ENCODE measurements at regions of chr1 and their contacts with region 1.

Region 1: GRCh38 chr1:160251687-160252526 is 10.4 kb downstream of the DCAF8 start:
- DNase-seq: peak; percentile 17
- H3K4me3 ChIP-seq: no peak overlapping the region
- H3K27me3 ChIP-seq: no peaks in the 10 kb centered on the region
- CTCF ChIP-seq: peak; percentile 70

Region 2: GRCh38 chr1:160085686-160086455 is 166.0 kb before region 1 on chr1:
- CTCF ChIA-PET with region 1: interaction called, 29 read pairs
- POLR2A ChIA-PET with region 1: interaction called, 6 read pairs
- DNase-seq: no peak
- H3K4me3 ChIP-seq: no peak overlapping the region
- H3K27me3 ChIP-seq: peaks cover 20% of the 10 kb centered on the region
- CTCF ChIP-seq: peak; percentile 91

Region 3: DNA sequence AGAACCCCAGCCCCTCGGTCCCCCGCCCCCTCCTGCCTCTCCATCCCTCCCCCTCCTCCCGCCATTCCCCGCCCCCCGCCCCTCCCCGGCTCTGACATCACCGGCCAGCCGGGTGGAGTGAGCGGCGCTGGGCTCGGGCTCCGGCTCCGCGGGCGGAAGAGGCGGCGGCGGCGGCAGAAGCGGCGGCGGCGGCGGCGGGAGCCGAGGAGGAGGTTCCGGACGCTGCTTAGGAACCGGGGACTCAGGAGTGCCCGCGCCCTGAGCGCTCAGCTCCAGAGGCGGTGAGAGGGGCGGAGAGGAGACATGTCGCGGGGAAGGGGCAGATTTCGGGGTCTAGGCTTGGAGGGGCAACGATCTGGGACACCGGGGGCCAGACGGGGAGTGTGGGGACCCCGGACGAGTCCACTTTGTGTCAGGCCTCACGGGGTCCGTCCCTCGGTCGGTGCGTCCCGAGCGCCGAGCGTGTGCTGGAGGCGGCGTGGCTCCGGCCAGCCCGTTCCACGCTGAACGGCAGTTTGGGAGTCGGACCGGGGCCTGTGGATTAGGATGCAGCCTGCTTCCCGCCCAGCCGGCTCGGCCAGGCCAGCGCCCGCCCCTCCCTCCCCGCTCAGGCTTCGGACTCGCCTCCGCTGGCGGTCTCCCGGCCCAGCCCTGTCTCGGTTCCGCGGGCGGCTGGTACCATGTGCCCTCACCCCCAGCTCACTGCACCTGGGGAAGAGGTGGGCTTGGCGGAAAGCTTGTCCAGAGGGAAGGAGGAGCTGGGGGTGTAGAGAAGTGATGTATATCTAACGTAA is 46.5 kb before region 1 on chr1 and contains the start of gene PEA15:
- CTCF ChIA-PET with region 1: interaction called, 11 read pairs
- POLR2A ChIA-PET with region 1: no interaction called
- DNase-seq: no peak
- H3K4me3 ChIP-seq: peak within 1 kb of the TSS; percentile 97
- H3K27me3 ChIP-seq: no peaks in the 10 kb centered on the region
- CTCF ChIP-seq: no peak
- polyA plus RNA-seq, gene PEA15: 937 and 1,035 TPM in 2 replicates

Region 4: DNA sequence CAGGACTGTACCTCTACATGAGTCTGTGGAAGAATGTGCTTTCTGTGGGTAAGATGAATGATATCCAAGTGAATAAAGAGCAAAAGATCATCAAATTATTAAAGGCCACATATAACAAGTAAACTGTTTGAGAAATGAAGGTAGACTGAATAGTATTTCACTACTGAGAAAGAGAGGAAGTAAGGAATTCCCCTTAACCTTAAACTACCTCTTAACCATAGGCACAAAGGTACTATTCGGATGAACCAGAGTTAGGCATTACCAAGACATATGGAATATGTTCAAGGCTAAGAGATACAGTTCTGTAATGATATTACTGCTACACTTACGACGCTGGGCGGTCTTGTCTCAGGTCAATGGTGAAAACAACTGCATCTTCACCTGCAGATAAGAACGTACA is 15.1 kb before region 1 on chr1:
- CTCF ChIA-PET with region 1: interaction called, 43 read pairs
- POLR2A ChIA-PET with region 1: no interaction called
- DNase-seq: no peak
- H3K4me3 ChIP-seq: no peak overlapping the region
- H3K27me3 ChIP-seq: no peaks in the 10 kb centered on the region
- CTCF ChIP-seq: no peak

Region 5: DNA sequence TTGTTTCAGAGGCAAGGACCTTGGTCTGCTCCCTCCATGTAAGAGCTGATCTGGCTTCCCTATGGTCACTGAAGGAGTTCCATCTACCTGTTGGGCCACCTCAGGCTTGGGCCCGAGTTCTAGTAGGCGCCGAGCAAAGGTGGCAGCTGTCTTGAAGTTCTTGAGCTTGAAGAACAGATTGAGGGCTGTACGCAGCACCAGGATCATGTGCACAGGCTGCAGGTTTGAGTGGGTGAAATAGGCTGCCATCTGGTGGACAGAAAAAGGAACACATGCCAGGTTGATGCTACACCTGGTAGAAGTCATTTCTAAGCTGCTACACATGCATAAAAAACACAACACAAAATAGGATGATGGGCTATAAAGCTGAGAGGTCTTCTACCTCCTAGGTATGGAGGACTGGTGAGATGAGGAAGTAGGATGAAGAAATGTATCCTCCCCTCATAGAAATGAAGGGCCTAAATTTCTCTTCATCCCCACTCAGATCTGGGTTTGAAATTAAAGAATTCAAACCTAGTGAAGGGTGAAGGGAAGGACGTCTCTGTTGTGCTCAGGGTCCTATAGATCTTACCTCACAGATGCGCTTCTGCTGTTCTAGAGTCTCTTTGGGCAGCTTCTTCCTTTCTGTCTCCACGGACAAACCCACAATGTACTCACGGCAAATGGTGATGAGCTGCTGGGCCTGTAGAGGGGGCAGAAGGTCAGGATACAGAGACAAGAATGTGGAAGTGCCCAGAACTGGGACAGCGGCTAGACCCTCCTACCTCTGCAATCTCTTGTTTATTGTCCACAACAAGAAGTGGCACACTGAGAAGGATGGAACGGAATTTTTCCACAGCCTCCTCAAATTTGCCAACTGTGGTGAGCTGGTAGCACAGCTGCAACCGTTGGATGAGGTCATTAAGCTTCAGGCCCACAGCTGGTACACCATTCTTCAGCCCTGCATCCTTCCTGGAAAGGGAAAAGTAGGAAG is 39.6 kb after region 1 on chr1:
- CTCF ChIA-PET with region 1: interaction called, 17 read pairs
- POLR2A ChIA-PET with region 1: no interaction called
- DNase-seq: no peak
- H3K4me3 ChIP-seq: no peak overlapping the region
- H3K27me3 ChIP-seq: no peaks in the 10 kb centered on the region
- CTCF ChIP-seq: peak; percentile 80

Region 6: DNA sequence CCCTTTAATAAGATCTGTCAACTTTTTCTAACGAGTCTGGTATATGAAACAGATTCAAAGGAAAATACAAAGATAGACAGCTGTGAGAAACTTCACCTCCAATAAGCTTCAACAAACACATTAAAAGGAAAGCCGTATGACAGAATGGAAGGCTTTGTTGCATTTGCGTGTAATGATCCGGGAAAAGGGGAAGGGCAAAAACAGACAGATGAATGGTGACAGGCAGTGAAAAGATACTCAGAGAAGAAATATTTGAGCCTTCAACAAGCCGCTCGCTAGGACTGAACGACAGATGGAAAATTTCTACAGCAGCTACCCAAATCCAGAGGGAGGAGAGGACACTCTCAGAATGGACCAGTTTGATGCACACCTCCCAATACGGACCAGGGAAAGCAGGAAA is 76.3 kb after region 1 on chr1:
- CTCF ChIA-PET with region 1: no interaction called
- POLR2A ChIA-PET with region 1: no interaction called
- DNase-seq: no peak
- H3K4me3 ChIP-seq: no peak overlapping the region
- H3K27me3 ChIP-seq: no peaks in the 10 kb centered on the region
- CTCF ChIP-seq: no peak

Measured in BJ (cell line).